ENCODE measurements at regions of chr5 and their contacts with region 1.

Region 1: DNA sequence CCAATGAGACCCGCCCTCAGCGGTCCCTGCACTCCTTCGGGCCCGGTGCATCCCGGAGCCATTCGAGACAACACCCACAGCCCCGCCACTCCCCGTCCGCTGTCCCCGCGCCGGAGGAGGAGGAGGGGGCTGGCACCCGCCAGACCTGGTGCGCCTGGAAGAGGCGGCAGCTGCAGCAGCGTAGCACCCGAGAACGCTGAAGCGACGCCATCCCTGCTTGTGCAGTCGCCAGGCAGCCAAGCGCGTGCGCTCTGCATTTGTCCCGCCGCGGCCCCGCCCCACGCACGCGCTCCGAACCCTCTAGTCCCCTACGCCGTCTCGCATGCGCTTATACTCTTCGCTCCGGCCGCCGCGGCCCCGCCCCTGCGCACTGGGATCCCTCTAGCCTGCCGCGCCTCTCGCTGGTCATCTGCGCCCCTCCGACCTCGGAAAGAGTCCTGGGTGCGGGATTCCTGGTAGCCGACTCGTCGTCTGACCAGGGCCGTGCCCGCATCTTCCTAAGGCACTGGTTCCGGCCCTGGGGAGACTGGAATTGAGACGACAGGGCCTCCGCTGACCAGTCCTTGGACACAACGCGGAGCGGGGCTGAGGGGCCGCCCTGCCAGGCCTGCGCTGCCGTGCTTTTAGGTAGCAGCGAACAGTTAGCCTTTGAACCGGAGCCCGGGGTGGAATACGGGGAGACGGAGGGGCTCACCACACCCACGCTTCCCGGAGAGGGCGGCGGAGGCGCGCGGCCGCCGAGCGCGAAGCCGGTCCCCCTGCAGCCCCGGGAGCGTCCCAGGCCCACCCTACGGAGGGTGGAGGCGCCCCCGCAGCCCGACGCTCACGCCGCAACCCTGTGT is at the start of gene MRNIP:
- DNase-seq: peak; percentile 97 to 98
- ATAC-seq: peak; percentile 99 to 100 (median 99)
- H3K4me3 ChIP-seq: peak within 1 kb of the TSS; percentile 48 to 99 (median 86)
- H3K27ac ChIP-seq: peak within 1 kb of the TSS; percentile 82 to 96 (median 92)
- H3K4me1 ChIP-seq: peaks cover 0 to 30% (median 17%) of the 10 kb centered on the region in 9 donors
- H3K27me3 ChIP-seq: no peaks in the 10 kb centered on the region
- CTCF ChIP-seq: peak in 6 of 9 donors; percentile 5 to 48 (median 30)
- total RNA-seq, gene MRNIP: 6.6 to 14.4 (median 12.7) TPM

Region 2: DNA sequence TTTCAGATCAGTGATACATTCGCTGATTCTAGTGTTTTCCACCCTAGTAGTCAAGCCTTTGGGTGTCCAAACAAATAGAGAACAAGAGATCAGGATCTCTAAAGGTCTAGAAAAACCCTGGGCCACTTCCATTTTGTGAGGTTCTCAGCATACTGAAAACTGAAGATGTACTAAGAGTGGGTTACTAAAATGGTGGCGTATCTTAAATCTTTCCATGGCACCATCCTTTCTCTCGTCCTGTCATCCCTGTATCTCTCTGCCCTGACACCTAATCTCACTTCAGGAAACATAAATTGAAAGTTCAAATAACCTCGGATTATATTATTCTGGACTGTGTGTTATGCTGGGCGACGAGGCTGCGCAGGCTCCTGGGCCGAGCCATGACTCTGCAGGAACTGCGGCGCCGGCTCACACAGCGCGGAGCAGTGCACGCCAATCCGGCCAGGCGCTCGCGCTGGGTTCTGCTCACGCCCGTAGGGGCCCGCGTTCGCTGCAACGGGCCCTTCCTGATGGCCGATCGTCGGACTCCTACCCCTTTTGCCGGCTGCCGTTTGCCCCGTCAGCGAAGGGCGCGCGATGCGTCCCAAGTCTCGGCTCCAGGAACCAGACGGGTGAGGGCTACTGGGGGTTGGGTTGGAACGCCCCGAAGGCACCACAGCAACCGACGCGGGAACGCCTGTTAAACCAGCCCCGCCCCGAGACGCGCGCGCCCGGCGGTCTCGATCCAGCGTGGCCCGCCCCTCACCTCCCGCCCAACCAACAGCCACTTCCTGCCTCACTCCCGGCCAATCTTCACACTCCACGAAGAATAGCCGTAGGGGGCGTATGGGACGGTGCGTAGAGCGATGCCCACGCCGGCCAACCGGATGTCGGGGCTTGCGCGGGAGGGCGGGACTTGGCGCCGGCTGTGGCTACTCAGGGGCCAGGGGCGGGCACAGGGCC is 160.5 kb before region 1 on chr5:
- intact Hi-C with region 1: no loop called
- DNase-seq: peak; percentile 99
- ATAC-seq: peak; percentile 95 to 98 (median 97)
- H3K4me3 ChIP-seq: peak overlapping the region; percentile 30 to 99 (median 89)
- H3K27ac ChIP-seq: peak overlapping the region; percentile 85 to 100 (median 97)
- H3K4me1 ChIP-seq: peaks cover 4 to 54% (median 39%) of the 10 kb centered on the region in 9 donors
- H3K27me3 ChIP-seq: no peaks in the 10 kb centered on the region
- CTCF ChIP-seq: peak in 6 of 9 donors; percentile 7 to 25 (median 10)

Region 3: GRCh38 chr5:179821581-179822432 is 37.0 kb before region 1 on chr5:
- intact Hi-C with region 1: loop called in 2 of 10 experiments (anchors 5 kb)
- DNase-seq: peak; percentile 96 to 98
- ATAC-seq: peak; percentile 74 to 85 (median 82)
- H3K4me3 ChIP-seq: peak overlapping the region; percentile 84 to 100 (median 97)
- H3K27ac ChIP-seq: peak overlapping the region; percentile 97 to 100 (median 100)
- H3K4me1 ChIP-seq: peaks cover 23 to 86% (median 74%) of the 10 kb centered on the region in 9 donors
- H3K27me3 ChIP-seq: no peaks in the 10 kb centered on the region
- CTCF ChIP-seq: no peak

Region 4: DNA sequence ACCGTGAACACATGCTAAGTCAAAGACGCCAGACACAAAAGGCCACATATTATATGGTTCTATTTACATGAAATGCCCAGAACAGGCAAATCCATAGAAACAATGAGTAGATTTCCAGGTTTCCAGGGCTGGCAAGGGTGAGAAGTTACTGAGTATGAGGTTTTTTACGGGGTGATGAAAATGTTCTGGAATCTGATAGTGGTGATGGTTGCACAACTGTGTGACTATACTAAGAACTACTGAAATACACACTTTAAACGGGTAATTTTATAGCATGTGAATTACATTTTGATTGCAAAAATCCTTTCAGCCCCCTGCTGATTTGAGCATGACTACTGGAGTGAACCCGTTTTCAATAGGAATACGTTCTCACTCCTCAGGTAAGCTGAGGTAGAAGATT is 95.6 kb after region 1 on chr5:
- intact Hi-C with region 1: no loop called
- DNase-seq: no peak
- ATAC-seq: no peak
- H3K4me3 ChIP-seq: no peak overlapping the region
- H3K27ac ChIP-seq: no peak overlapping the region
- H3K4me1 ChIP-seq: peaks cover 0 to 6% (median 0%) of the 10 kb centered on the region in 9 donors
- H3K27me3 ChIP-seq: no peaks in the 10 kb centered on the region
- CTCF ChIP-seq: no peak

Region 5: DNA sequence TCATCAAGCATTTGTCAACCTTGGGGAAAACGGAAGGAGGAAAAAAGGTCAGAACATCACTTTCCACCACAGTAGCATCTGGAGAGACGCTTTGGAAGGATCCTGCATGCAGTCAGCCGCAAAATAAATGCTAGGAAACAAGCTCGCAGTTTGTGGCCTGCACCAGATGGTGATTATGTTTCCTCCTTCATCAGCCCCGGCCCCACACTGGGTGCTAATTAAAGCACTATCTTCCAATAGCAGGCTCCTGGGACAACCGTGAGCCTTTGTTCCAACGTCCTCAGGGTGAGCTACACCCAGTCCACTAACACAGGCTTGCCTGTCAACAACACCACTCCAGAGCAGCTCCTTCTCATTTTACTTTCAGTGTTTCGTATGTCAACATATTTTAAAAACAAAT is 148.8 kb after region 1 on chr5:
- intact Hi-C with region 1: no loop called
- DNase-seq: peak in 1 of 2 donors; percentile 22
- ATAC-seq: peak; percentile 71 to 97 (median 91)
- H3K4me3 ChIP-seq: no peak overlapping the region
- H3K27ac ChIP-seq: peak overlapping the region in 7 of 10 donors; percentile 27 to 78 (median 37)
- H3K4me1 ChIP-seq: peaks cover 0 to 30% (median 17%) of the 10 kb centered on the region in 9 donors
- H3K27me3 ChIP-seq: no peaks in the 10 kb centered on the region
- CTCF ChIP-seq: no peak

Measured in heart right ventricle (tissue), 16 donors.